ENCODE measurements at regions of chr17 and their contacts with region 1.

Region 1: DNA sequence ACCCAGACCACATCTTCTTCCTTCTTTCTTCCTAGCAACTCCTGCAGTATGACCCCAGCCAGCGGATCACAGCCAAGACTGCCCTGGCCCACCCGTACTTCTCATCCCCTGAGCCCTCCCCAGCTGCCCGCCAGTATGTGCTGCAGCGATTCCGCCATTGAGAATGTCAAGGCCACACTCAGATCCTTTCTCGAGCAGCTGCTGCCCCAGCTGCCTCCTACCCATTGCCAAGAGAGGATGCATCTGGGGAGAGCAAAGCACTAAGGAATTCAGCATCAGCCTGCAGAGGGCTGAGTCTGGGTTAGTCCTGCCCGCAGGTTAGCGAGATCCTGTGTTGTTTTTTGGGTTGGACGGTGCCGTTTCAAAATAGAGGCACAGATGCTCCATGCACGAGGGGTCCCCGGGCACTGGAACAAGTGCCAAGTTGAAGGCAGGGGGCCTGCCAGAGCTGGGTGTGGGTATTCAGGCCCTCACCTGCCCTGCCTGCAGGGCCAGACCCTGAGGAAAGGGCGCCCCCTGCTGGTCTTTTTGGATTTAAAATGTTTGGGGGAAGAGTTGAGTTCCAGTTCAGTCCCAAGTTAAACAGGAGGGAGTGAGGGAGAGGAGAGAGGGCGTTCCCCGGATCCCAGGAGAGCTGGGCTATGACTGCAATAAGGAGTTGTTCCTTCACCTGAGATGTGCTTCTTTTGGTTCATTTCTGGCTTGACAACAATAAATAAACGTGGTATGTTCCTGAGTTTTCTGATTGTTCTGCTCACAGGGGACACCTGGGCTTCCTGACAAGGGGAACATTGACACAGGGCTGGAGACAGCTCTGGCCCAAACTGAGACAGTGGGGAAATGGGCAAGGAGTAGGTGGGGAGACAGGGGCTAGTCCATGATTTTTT is 4.9 kb downstream of the CDK3 start:
- DNase-seq: peak; percentile 65 to 84
- ATAC-seq: peak; percentile 68 to 87 (median 74)
- H3K4me3 ChIP-seq: no peak overlapping the region
- H3K27ac ChIP-seq: no peak overlapping the region
- H3K4me1 ChIP-seq: no peaks in the 10 kb centered on the region
- H3K27me3 ChIP-seq: no peaks in the 10 kb centered on the region
- CTCF ChIP-seq: peak; percentile 77

Region 2: DNA sequence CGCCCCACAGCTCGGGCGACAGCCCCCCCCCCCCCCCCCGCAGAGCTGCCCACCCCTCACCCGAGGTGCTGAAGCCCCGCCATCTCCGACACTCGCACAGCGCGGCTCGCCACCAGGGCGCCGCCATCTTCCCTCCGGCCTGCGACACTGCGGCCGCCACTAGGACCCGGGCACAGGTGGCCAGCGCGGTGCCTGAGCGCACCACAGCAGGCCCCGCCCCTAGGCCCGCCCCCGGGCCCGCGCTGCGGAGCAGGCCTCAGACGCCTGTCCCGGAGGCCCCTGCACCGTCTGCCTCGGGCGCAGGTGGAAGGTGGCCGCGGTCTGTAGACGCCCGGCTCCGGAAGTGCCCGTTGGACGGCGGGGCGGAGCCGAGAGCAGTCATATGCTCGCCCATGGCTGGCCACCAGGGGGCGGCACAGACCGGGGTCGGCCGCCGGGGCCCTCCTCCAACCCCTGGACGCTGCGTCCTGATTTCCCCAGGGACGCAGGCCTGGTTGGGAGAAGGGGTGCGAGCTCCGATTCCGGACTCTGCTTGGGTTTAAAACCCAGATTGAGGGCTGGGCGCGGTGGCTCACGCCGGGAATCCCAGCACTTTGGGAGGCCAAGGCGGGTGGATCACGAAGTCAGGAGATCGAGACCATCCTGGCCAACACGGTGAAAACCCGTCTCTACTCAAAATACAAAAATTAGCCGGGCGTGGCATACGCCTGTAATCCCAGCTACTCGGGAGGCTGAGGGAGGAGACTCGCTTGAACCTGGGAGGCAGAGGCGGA is 100.6 kb before region 1 on chr17 and contains the start of gene MRPL38:
- intact Hi-C with region 1: loop called (anchors 1 to 2 kb)
- DNase-seq: peak; percentile 93 to 96
- ATAC-seq: peak; percentile 94 to 98 (median 96)
- H3K4me3 ChIP-seq: peak within 1 kb of the TSS; percentile 98
- H3K27ac ChIP-seq: peak within 1 kb of the TSS; percentile 86
- H3K4me1 ChIP-seq: peaks cover 13% of the 10 kb centered on the region
- H3K27me3 ChIP-seq: no peaks in the 10 kb centered on the region
- CTCF ChIP-seq: peak; percentile 99
- total RNA-seq, gene MRPL38: 107 to 168 (median 125) TPM

Region 3: GRCh38 chr17:75959051-75959838 is 46.3 kb before region 1 on chr17:
- intact Hi-C with region 1: no loop called
- DNase-seq: no peak
- ATAC-seq: no peak
- H3K4me3 ChIP-seq: no peak overlapping the region
- H3K27ac ChIP-seq: no peak overlapping the region
- H3K4me1 ChIP-seq: no peaks in the 10 kb centered on the region
- H3K27me3 ChIP-seq: no peaks in the 10 kb centered on the region
- CTCF ChIP-seq: no peak

Region 4: GRCh38 chr17:75983531-75984181 is 21.9 kb before region 1 on chr17:
- intact Hi-C with region 1: no loop called
- DNase-seq: no peak
- ATAC-seq: no peak
- H3K4me3 ChIP-seq: no peak overlapping the region
- H3K27ac ChIP-seq: no peak overlapping the region
- H3K4me1 ChIP-seq: peaks cover 7% of the 10 kb centered on the region
- H3K27me3 ChIP-seq: no peaks in the 10 kb centered on the region
- CTCF ChIP-seq: no peak